ENCODE measurements at regions of chr1 and their contacts with region 1.

Region 1: GRCh38 chr1:24541711-24542346 is 14.1 kb upstream of the NCMAP start:
- DNase-seq: peak; percentile 25
- ATAC-seq: peak; percentile 67
- H3K4me3 ChIP-seq: peak overlapping the region; percentile 10 to 51 (median 47); a peak in 5 of 6 replicates
- H3K27ac ChIP-seq: peak overlapping the region; percentile 94
- H3K4me1 ChIP-seq: peaks cover 64% of the 10 kb centered on the region
- H3K27me3 ChIP-seq: no peaks in the 10 kb centered on the region
- CTCF ChIP-seq: peak; percentile 80
- EP300 ChIP-seq: no peak
- POLR2A ChIP-seq: no peak
- RAD21 ChIP-seq: peak; percentile 76

Region 2: GRCh38 chr1:24415334-24415909 is 126.4 kb before region 1 on chr1 and contains the start of gene NIPAL3:
- CTCF ChIA-PET with region 1: no interaction called
- POLR2A ChIA-PET with region 1: interaction called, 11 read pairs
- in situ Hi-C with region 1: no loop called
- intact Hi-C with region 1: no loop called
- DNase-seq: peak; percentile 97
- ATAC-seq: peak; percentile 94
- H3K4me3 ChIP-seq: peak within 1 kb of the TSS; percentile 75 to 77 (median 75)
- H3K27ac ChIP-seq: peak within 1 kb of the TSS; percentile 47
- H3K4me1 ChIP-seq: peaks cover 43% of the 10 kb centered on the region
- H3K27me3 ChIP-seq: no peaks in the 10 kb centered on the region; a peak in 1 of 5 replicates
- CTCF ChIP-seq: peak; percentile 93
- EP300 ChIP-seq: 0 out of 4 replicates have a peak, but pooled peaks of 1 of the 2 experiments have one; percentile 6
- POLR2A ChIP-seq: no peak
- RAD21 ChIP-seq: peak; percentile 85
- total RNA-seq, gene NIPAL3: 5.6 and 5.8 TPM in 2 replicates

Region 3: DNA sequence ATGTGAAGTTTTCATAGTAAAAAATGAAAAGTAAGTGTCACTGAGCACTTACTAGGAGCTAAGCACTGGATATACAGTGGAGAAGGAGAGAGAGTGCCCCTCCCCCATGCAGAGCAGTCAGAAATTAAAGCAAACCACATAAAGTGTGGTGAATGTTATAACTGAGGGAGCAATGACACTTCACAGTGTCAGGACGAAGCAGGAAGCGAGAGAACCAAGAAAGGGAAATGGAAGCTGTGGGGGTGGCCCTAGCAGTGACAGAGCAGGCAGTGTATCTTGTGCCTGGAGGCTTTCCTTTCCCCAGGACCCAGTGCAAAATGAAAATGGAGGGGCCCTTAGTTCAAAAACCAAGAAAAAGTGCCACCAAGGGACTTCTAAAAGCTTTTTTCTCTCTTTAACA is 60.7 kb before region 1 on chr1:
- CTCF ChIA-PET with region 1: no interaction called
- POLR2A ChIA-PET with region 1: no interaction called
- in situ Hi-C with region 1: no loop called
- intact Hi-C with region 1: no loop called
- DNase-seq: no peak
- ATAC-seq: no peak
- H3K4me3 ChIP-seq: no peak overlapping the region
- H3K27ac ChIP-seq: no peak overlapping the region
- H3K4me1 ChIP-seq: peaks cover 28% of the 10 kb centered on the region
- H3K27me3 ChIP-seq: no peaks in the 10 kb centered on the region; a peak in 1 of 5 replicates
- CTCF ChIP-seq: no peak
- EP300 ChIP-seq: no peak
- POLR2A ChIP-seq: no peak
- RAD21 ChIP-seq: no peak

Region 4: DNA sequence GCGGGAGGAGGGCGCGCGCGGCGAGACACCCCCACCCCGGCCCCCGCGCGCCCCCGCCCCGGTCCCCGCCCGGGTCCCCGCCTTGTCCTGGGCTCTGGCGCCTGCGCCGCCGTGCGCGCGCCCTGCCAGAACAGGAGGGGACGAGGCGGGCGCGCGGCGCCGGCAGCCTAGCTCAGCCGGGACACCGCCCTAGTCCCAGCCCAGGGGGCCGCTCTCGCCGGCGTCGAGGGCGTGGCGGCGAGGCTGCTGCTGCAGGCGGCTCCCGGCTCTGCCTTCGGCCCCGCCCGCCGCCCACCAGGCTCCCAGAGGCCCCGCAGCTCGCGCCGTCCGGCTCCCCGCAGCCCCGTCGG is 39.1 kb before region 1 on chr1 and contains the start of gene RCAN3:
- CTCF ChIA-PET with region 1: no interaction called
- POLR2A ChIA-PET with region 1: interaction called, 11 read pairs
- in situ Hi-C with region 1: no loop called
- intact Hi-C with region 1: no loop called
- DNase-seq: peak; percentile 69
- ATAC-seq: peak; percentile 88
- H3K4me3 ChIP-seq: peak within 1 kb of the TSS; percentile 71 to 84 (median 79)
- H3K27ac ChIP-seq: peak within 1 kb of the TSS; percentile 93
- H3K4me1 ChIP-seq: peaks cover 47% of the 10 kb centered on the region
- H3K27me3 ChIP-seq: no peaks in the 10 kb centered on the region; a peak in 1 of 5 replicates
- CTCF ChIP-seq: no peak
- EP300 ChIP-seq: no peak
- POLR2A ChIP-seq: peak in 1 of 2 experiments; percentile 50; a peak in 2 of 4 replicates
- RAD21 ChIP-seq: peak; percentile 52
- total RNA-seq, gene RCAN3: 13.3 and 13.6 TPM in 2 replicates

Region 5: GRCh38 chr1:24558902-24559791 is 17.3 kb after region 1 on chr1:
- CTCF ChIA-PET with region 1: no interaction called
- POLR2A ChIA-PET with region 1: interaction called, 13 read pairs
- in situ Hi-C with region 1: no loop called
- intact Hi-C with region 1: no loop called
- DNase-seq: peak; percentile 89
- ATAC-seq: peak; percentile 71
- H3K4me3 ChIP-seq: peak overlapping the region in 1 of 3 experiments; percentile 82; a peak in 1 of 6 replicates
- H3K27ac ChIP-seq: peak overlapping the region; percentile 59
- H3K4me1 ChIP-seq: peaks cover 60% of the 10 kb centered on the region
- H3K27me3 ChIP-seq: no peaks in the 10 kb centered on the region
- CTCF ChIP-seq: no peak
- EP300 ChIP-seq: peak in 1 of 2 experiments; percentile 66; a peak in 2 of 4 replicates
- POLR2A ChIP-seq: no peak
- RAD21 ChIP-seq: no peak

Region 6: DNA sequence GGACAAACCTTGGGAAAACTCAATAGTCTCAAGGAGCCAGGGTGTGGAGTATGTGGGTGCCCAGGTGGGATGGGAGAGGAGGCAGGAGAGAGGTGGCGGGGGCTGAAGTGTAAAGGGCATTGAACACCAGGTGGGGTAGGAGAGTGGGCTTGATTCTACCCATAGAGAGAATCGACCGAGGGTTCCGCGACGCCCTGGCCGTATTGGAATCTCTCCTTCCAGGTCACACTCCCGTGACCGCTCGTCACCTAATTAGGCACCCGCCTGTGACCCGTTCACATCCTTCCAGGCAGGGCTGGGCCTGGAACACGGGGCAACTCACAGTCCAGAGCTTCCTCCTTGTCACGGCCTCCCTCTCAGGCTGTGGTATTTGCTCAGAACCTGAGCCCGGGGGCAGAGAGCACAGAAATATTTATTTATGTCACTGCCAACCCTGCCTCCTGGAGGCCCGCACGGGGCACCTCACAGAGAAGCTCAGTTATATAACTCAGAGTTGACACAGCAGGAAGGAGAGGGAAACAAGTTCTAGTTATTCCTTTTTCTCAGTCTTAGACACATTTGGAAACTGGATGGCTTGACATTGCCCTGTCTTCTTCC is 26.1 kb after region 1 on chr1:
- CTCF ChIA-PET with region 1: no interaction called
- POLR2A ChIA-PET with region 1: interaction called, 15 read pairs
- in situ Hi-C with region 1: no loop called
- intact Hi-C with region 1: no loop called
- DNase-seq: peak; percentile 92
- ATAC-seq: peak; percentile 97
- H3K4me3 ChIP-seq: peak overlapping the region; percentile 36 to 69 (median 45); a peak in 4 of 6 replicates
- H3K27ac ChIP-seq: peak overlapping the region; percentile 84
- H3K4me1 ChIP-seq: peaks cover 72% of the 10 kb centered on the region
- H3K27me3 ChIP-seq: no peaks in the 10 kb centered on the region
- CTCF ChIP-seq: peak; percentile 50
- EP300 ChIP-seq: peak; percentile 66 to 94; a peak in 3 of 4 replicates
- POLR2A ChIP-seq: no peak
- RAD21 ChIP-seq: peak; percentile 75

Region 7: DNA sequence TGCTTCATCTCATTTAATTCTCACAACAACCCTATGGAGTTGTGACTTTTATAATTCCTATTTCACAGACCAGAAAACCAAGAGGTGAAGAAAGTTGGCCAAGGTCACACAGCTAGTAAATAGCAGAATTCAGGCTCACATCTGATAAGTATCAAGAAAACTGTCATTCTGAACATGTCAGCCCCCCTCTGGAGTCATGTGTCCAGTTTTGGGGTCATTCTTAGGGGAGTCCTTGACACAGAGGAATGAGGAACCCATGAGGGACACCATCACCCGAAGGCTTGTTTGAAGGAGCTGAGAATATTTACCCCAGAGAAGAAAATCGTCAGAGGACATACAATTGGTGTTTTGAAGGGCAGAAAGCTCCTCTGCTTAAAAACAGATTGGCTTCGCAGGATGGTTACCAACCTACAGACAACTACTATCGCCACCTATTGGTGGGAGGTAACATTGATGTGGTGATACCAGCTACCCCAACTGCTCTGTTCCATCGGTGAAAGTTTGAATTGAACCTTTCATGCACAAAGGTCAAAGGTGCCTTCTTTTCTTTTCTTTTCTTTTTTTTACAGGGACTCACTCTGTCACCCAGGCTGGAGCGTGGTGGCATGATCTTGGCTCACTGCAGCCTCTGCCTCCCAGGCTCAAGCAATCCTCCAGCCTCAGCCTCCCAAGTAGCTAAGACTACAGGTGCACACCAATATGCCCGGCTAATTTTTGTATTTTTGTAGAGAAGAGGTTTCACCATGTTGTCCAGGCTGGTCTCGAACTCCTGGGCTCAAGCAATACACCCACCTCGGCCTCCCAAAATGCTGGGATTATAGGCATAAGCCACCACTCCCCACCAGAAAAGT is 45.4 kb after region 1 on chr1:
- CTCF ChIA-PET with region 1: interaction called, 8 read pairs
- POLR2A ChIA-PET with region 1: interaction called, 10 read pairs
- in situ Hi-C with region 1: no loop called
- intact Hi-C with region 1: loop called (anchors 1 kb)
- DNase-seq: peak; percentile 53
- ATAC-seq: peak; percentile 78
- H3K4me3 ChIP-seq: no peak overlapping the region
- H3K27ac ChIP-seq: no peak overlapping the region
- H3K4me1 ChIP-seq: peaks cover 45% of the 10 kb centered on the region
- H3K27me3 ChIP-seq: no peaks in the 10 kb centered on the region
- CTCF ChIP-seq: peak; percentile 83
- EP300 ChIP-seq: no peak
- POLR2A ChIP-seq: no peak
- RAD21 ChIP-seq: peak; percentile 67; the same call in 1 of the 2 replicates

Region 8: GRCh38 chr1:24635195-24635843 is 93.5 kb after region 1 on chr1:
- CTCF ChIA-PET with region 1: no interaction called
- POLR2A ChIA-PET with region 1: no interaction called
- in situ Hi-C with region 1: loop called (anchors 10 kb)
- intact Hi-C with region 1: loop called (anchors 5 kb)
- DNase-seq: peak; percentile 72
- ATAC-seq: peak; percentile 74
- H3K4me3 ChIP-seq: no peak overlapping the region
- H3K27ac ChIP-seq: no peak overlapping the region
- H3K4me1 ChIP-seq: peaks cover 35% of the 10 kb centered on the region
- H3K27me3 ChIP-seq: no peaks in the 10 kb centered on the region
- CTCF ChIP-seq: peak; percentile 85
- EP300 ChIP-seq: no peak
- POLR2A ChIP-seq: no peak
- RAD21 ChIP-seq: peak; percentile 72